Heart right ventricle (tissue), 16 donors: ENCODE measurements at regions of chr9 and their contacts with region 1.

Region 1: DNA sequence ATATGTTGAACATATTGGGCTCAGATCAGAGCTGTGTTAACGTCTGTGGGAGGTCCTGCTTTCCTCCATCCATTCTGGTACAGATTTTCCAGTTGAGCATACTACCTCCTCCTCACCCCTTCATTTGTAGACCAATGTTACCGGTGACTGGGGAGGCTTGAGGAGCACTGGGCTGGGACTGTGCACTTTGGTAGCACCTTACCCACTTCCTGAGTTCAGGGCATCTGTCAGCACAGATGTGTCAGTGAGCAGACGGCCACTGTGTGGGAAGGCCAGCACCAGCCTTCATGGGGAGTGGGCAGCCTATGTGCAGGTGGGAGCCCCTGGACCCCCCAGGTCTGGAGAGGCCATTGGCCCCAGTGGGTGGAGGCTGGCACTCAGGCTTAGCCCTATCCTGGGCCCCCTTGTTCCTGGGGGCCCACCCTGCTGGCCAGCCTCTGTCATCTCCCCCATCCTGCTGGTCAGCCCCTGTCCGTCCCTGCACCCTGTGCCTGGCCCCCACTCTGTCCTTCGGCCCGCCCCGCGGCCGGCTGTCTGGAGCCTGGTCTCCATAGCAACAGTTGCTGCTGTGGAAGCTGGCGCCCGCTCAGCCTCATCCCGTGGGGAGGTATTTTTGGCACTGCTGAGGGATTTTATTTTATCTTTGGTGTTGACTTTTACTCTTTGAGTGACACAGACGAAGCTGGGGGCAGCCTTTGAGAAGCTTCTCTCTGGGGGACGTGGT is 21.3 kb downstream of the WNK2 start:
- DNase-seq: peak; percentile 80 to 85
- ATAC-seq: peak; percentile 67 to 84 (median 78)
- H3K4me3 ChIP-seq: no peak overlapping the region
- H3K27ac ChIP-seq: peak overlapping the region; percentile 31 to 92 (median 83)
- H3K4me1 ChIP-seq: peaks cover 39 to 94% (median 74%) of the 10 kb centered on the region in 9 donors
- H3K27me3 ChIP-seq: no peaks in the 10 kb centered on the region
- CTCF ChIP-seq: no peak

Region 2: GRCh38 chr9:93095205-93096130 is 109.7 kb before region 1 on chr9:
- intact Hi-C with region 1: no loop called
- DNase-seq: peak; percentile 100
- ATAC-seq: peak; percentile 85 to 94 (median 90)
- H3K4me3 ChIP-seq: peak overlapping the region; percentile 4 to 100 (median 97)
- H3K27ac ChIP-seq: peak overlapping the region; percentile 91 to 99 (median 96)
- H3K4me1 ChIP-seq: peaks cover 18 to 71% (median 59%) of the 10 kb centered on the region in 9 donors
- H3K27me3 ChIP-seq: no peaks in the 10 kb centered on the region
- CTCF ChIP-seq: no peak

Region 3: DNA sequence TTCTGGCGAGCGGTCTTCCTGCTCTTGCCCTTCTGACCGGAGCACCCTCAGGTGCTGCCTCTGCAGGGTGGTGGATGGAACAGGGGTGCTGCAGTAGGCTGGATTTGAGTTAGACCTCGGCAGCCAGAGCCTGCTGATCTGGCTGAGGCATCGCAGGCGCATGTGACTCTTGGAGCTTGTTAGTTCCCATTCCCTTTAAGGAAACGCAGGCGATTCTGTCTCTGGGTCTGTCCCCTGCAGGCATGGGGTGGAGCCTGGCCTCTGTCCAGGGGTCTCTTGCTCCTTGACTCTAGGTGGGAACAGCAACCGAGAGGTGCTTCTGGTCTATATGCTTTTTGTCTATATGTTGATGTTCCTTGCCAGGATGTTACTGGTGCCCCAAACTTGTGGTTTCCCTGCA is 18.2 kb before region 1 on chr9:
- intact Hi-C with region 1: loop called in 1 of 10 experiments (anchors 1 kb)
- DNase-seq: peak; percentile 59 to 75
- ATAC-seq: peak; percentile 39 to 81 (median 64)
- H3K4me3 ChIP-seq: peak overlapping the region in 8 of 10 donors; percentile 9 to 65 (median 62)
- H3K27ac ChIP-seq: peak overlapping the region; percentile 63 to 92 (median 88)
- H3K4me1 ChIP-seq: peaks cover 4 to 81% (median 25%) of the 10 kb centered on the region in 9 donors
- H3K27me3 ChIP-seq: peaks cover 0 to 65% (median 22%) of the 10 kb centered on the region in 7 donors
- CTCF ChIP-seq: no peak